ENCODE measurements at regions of chr21 and their contacts with region 1.

Region 1: GRCh38 chr21:33947451-33948095 is 32.0 kb upstream of the ATP5PO start:
- DNase-seq: peak; percentile 62 to 95 (median 86)
- ATAC-seq: peak; percentile 60 to 65
- H3K4me3 Mint-ChIP-seq: peak overlapping the region; percentile 66 to 91 (median 78)
- H3K27ac Mint-ChIP-seq: peak overlapping the region; percentile 94 to 100 (median 98)
- H3K4me1 Mint-ChIP-seq: peaks cover 44 to 87% (median 80%) of the 10 kb centered on the region in 4 donors
- H3K27me3 Mint-ChIP-seq: no peaks in the 10 kb centered on the region

Region 2: GRCh38 chr21:33825915-33826314 is 121.7 kb before region 1 on chr21:
- POLR2A ChIA-PET with region 1: no interaction called
- DNase-seq: no peak
- ATAC-seq: no peak
- H3K4me3 Mint-ChIP-seq: no peak overlapping the region
- H3K27ac Mint-ChIP-seq: no peak overlapping the region
- H3K4me1 Mint-ChIP-seq: no peaks in the 10 kb centered on the region
- H3K27me3 Mint-ChIP-seq: peaks cover 0 to 3% (median 0%) of the 10 kb centered on the region in 5 donors

Region 3: DNA sequence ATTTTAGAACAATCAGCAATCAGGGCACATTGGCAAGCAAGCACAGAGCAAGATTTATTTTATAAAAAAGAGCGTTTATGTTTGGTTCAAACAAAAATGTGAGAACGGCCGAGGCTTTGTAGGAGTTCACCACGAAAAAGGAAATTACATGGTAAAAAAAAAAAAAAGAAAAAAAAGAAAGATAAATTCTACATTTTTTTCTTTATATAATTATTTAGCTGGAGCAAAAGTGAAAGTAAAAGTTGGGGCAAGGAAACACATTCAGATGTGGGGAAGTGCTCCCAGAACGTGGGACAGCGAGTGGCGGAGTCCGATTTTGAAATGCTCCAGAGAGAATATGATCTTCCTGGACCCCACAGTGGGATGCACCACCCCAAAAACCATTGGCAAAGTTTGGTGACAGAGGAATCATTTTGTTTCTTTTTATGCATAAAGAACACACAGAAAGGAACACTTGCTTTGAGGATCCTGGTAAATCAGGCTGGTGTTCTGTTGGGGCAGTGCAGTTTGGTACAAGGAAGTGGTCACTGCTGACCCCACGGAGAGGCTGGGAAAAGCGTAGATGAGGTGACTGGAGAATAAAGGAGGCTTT is 15.7 kb before region 1 on chr21:
- POLR2A ChIA-PET with region 1: interaction called, 625 read pairs
- DNase-seq: peak in 1 of 10 donors; percentile 77
- ATAC-seq: peak; percentile 11 to 24
- H3K4me3 Mint-ChIP-seq: peak overlapping the region; percentile 92 to 100 (median 98)
- H3K27ac Mint-ChIP-seq: peak overlapping the region; percentile 97 to 100 (median 100)
- H3K4me1 Mint-ChIP-seq: peaks cover 17 to 49% (median 40%) of the 10 kb centered on the region in 4 donors
- H3K27me3 Mint-ChIP-seq: no peaks in the 10 kb centered on the region

Region 4: DNA sequence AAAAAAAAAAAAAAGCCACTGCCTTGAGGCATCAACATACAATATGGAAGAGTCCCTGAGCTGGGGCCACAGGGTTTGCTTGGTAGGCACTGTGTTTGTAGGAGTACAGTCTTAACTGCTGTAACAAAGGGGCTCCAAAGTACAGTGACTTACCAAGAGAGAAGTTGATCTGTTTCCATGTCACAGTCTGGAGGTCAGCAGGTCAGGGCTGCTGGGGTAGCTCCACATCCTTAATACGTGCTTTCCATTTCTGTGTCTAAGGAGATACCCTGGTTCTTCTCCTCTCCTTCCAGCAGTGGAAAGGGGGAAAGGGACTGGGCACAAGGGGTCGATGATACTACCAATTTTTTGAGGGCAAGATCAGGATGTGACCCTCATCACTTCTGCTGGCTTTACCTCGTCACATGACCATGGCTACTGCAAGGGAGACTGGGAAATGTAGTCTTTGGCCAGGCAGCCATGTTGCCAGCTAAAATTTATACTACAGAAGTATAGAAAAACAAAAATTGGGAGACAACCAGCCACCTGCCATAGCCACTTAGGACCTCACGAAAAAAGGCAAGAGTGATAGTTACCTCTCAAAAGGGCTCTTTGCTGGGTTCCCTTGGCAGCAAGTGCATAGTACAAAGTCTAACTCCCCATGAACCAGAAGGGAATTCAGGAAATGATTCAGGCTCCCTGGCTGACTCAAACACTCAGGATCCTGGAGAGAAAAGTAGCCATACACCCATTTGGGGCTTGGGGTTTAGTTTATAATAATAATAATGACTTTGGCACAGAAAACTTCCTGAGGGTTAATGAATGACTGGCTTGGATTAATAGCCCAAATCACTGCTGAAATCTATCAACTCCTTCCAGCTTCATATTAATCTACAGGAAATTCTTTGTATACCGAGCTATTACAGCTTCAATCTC is 20.8 kb after region 1 on chr21:
- POLR2A ChIA-PET with region 1: interaction called, 15 read pairs
- DNase-seq: peak in 2 of 10 donors; percentile 12 to 36
- ATAC-seq: peak; percentile 65 to 72
- H3K4me3 Mint-ChIP-seq: peak overlapping the region in 1 of 10 donors; percentile 40
- H3K27ac Mint-ChIP-seq: peak overlapping the region in 9 of 10 donors; percentile 26 to 79 (median 53)
- H3K4me1 Mint-ChIP-seq: peaks cover 18 to 30% (median 24%) of the 10 kb centered on the region in 4 donors
- H3K27me3 Mint-ChIP-seq: no peaks in the 10 kb centered on the region

Region 5: DNA sequence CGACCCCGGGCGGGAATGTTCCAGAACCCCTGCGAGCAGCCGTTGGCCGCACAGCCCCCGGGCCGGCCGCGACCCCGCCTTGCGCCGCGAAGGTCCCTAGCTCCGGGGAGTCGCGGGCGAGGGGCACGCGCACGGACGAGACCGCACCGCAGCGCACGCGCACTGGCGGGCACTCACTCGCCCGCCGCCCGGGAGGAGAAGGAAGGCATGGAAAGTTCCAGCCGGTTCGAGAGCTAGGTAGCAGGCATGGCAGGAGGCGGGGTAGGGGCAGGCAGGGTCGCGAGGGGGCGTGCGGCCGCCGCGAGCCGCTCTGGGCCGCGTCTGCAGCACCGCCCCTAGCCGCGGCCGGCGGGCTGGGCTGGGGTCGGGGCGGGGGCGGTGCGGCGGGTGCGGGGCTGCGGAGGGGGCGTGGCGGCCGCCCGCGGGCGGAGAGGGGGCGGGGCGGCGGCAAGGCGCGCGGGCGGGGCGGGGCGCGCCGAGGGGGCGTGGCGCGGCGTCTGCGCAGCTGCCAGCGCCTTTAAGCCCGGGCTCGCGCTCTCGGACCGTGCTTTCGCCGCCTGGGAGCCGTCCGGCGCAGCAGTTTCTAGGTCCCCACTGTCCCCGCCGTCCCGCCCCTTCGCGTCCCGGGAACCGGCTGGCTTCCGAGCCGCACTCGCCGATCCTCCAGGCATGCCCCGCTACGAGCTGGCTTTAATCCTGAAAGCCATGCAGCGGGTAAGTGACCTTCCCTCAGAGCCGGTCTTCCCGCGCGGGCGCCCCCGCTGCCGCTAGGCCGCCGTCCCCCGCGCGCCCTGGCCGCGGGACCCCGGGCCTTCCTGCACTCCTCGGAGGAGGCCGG is 125.7 kb after region 1 on chr21 and contains the starts of genes MRPS6 and SLC5A3:
- POLR2A ChIA-PET with region 1: interaction called, 71 read pairs
- DNase-seq: peak; percentile 38 to 84 (median 74)
- ATAC-seq: peak; percentile 68 to 71
- H3K4me3 Mint-ChIP-seq: peak within 1 kb of the TSS; percentile 92 to 98 (median 96)
- H3K27ac Mint-ChIP-seq: peak within 1 kb of the TSS; percentile 88 to 96 (median 92)
- H3K4me1 Mint-ChIP-seq: peaks cover 40 to 53% (median 44%) of the 10 kb centered on the region in 4 donors
- H3K27me3 Mint-ChIP-seq: no peaks in the 10 kb centered on the region
- polyA plus RNA-seq, gene MRPS6: 170 to 193 (median 181) TPM
- polyA plus RNA-seq, gene SLC5A3: 1.7 to 2.1 (median 1.9) TPM

Region 6: GRCh38 chr21:34129039-34129891 is 181.7 kb after region 1 on chr21:
- POLR2A ChIA-PET with region 1: interaction called, 11 read pairs
- DNase-seq: peak; percentile 30 to 85 (median 69)
- ATAC-seq: peak; percentile 89 to 91
- H3K4me3 Mint-ChIP-seq: peak overlapping the region; percentile 62 to 82 (median 70)
- H3K27ac Mint-ChIP-seq: peak overlapping the region; percentile 75 to 95 (median 88)
- H3K4me1 Mint-ChIP-seq: peaks cover 69 to 93% (median 92%) of the 10 kb centered on the region in 4 donors
- H3K27me3 Mint-ChIP-seq: no peaks in the 10 kb centered on the region

Measured in naive thymus-derived CD8-positive, alpha-beta T cell (primary cell).